Heart left ventricle (tissue), 16 donors: ENCODE measurements at regions of chr2 and their contacts with region 1.

Region 1: DNA sequence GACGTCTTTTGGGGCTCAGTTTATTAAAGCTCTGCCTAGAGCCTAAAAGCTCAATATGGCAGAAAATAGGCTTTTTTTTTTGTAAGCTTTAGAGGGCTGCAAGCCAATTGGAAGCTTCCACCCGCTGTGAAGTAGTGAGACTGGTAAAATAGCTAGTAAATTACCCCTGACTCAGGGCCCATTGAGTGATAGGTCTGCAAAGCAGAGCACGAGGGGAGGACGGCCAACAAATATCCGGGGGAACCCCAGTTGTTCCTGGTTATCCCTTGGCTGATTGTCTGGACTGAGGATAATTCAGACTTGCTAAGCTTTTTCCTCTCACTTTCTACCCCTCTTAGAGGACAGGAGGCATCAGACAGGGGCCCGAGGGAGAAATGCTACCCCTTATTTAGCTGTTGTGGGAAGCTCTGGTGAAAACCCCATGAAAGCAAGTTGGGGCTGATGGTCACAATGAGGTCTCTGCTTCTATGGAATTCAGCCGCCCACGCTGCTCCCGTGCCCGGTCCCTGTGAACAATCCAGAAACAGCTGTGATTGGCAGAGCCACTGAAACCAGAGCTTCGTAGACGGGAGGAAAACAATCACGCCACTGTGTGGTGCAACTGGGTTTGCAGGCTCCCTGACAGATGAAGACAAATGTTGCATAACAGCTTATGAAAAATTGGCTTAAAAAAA is 141.9 kb upstream of the LGALSL start:
- DNase-seq: peak; percentile 75 to 83 (median 79)
- ATAC-seq: peak; percentile 73 to 97 (median 94)
- H3K4me3 ChIP-seq: peak overlapping the region in 6 of 12 donors; percentile 2 to 40 (median 24)
- H3K27ac ChIP-seq: peak overlapping the region in 10 of 12 donors; percentile 12 to 69 (median 43)
- H3K4me1 ChIP-seq: peaks cover 0 to 26% (median 15%) of the 10 kb centered on the region in 12 donors
- H3K27me3 ChIP-seq: no peaks in the 10 kb centered on the region
- CTCF ChIP-seq: peak; percentile 35 to 71 (median 52)
- POLR2A ChIP-seq: no peak

Region 2: DNA sequence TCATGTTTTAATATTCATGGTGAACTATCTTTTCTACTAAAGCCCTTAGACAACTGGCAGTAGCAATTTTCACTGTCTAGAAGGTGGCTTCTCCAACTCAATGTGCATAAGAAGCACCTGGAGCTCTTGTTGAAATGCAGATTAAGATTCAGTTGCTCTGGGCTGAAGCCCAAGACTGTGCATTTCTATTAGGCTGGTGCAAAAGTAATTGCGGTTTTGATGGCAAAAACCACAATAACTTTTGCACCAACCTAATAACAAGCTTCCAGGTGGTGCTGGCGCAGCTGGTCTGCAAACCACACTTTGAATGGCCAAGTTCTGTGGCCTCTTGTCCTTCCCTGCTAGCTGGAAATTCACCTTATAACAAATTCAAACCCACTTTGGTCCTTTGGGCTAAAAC is 266.1 kb before region 1 on chr2:
- intact Hi-C with region 1: loop called in 6 of 10 experiments (anchors 1 to 5 kb)
- DNase-seq: no peak
- ATAC-seq: no peak
- H3K4me3 ChIP-seq: no peak overlapping the region
- H3K27ac ChIP-seq: no peak overlapping the region
- H3K4me1 ChIP-seq: peaks cover 0 to 7% (median 0%) of the 10 kb centered on the region in 12 donors
- H3K27me3 ChIP-seq: no peaks in the 10 kb centered on the region
- CTCF ChIP-seq: no peak
- POLR2A ChIP-seq: no peak

Region 3: DNA sequence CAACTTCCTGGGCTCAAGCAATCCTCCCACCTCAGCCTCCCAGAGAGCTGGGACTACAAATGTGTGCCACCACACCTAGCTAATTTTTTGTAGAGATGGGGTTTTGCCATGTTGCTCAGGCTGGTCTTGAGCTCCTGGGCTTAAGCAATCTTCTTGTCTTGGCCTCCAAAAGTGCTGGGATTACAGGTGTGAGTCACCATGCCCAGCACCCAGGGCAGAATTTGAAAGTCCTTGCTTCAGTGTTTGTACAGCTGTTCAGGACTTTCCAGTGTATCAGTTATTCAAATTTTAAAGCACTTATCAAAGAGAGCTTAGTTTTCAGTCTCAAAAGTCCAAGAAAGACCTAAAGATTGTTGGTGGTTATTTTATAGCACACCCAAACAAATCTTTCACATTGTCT is 249.3 kb before region 1 on chr2:
- intact Hi-C with region 1: loop called in 1 of 10 experiments (anchors 5 kb)
- DNase-seq: no peak
- ATAC-seq: no peak
- H3K4me3 ChIP-seq: no peak overlapping the region
- H3K27ac ChIP-seq: no peak overlapping the region
- H3K4me1 ChIP-seq: peaks cover 0 to 28% (median 8%) of the 10 kb centered on the region in 12 donors
- H3K27me3 ChIP-seq: no peaks in the 10 kb centered on the region
- CTCF ChIP-seq: no peak
- POLR2A ChIP-seq: no peak

Region 4: DNA sequence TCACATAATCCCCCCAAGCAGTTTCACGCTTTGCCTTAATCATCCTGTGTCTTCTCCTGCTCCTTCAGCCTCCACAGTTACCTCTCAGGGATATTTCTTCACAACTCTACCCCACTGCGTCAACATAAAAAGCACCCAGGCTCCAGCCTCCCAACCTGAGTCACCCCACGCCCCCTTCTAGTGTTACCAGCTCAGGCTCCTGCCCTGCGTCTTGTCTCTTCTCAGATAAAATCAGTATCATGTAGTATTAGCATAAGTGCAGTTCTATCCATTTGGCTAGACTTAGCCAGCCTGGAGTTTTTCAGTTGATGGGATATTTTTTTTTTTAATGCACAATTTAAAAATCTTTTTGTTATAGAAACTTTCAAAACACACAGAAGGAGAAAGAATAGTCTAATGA is 158.3 kb before region 1 on chr2:
- intact Hi-C with region 1: loop called in 2 of 10 experiments (anchors 5 to 10 kb)
- DNase-seq: no peak
- ATAC-seq: no peak
- H3K4me3 ChIP-seq: no peak overlapping the region
- H3K27ac ChIP-seq: no peak overlapping the region
- H3K4me1 ChIP-seq: peaks cover 0 to 8% (median 0%) of the 10 kb centered on the region in 12 donors
- H3K27me3 ChIP-seq: no peaks in the 10 kb centered on the region
- CTCF ChIP-seq: no peak
- POLR2A ChIP-seq: no peak

Region 5: DNA sequence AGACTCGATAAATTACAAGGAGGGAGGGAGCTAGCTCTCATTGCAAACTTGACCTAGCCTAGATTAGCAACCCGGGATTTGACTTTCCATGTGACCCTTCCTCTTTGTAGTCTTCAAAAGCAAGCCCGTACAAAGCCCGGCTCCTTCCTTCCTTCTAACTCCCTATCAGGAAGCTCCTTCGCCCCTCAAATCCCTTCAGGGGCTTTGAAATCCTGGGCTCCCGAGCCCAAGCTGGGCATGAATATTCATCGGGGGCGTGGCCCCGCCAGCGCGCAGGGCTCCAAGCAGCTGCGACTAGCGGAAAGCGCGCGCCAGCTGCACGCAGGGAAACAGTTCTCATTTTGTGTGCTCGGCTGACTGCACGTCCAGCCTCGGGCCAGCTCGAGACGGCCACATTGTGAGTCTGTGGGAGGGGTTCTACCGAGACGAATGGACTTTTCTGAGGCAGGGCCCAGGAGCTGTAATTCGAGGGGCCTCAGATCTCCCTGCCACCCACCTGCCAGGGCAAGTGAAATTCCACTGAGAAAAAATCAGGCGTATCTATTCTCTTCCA is 83.9 kb before region 1 on chr2:
- intact Hi-C with region 1: loop called in 1 of 10 experiments (anchors 5 kb)
- DNase-seq: peak; percentile 86 to 94 (median 87)
- ATAC-seq: peak; percentile 94 to 99 (median 98)
- H3K4me3 ChIP-seq: peak overlapping the region; percentile 14 to 62 (median 50)
- H3K27ac ChIP-seq: peak overlapping the region; percentile 21 to 88 (median 78)
- H3K4me1 ChIP-seq: peaks cover 0 to 27% (median 15%) of the 10 kb centered on the region in 12 donors
- H3K27me3 ChIP-seq: no peaks in the 10 kb centered on the region
- CTCF ChIP-seq: peak in 3 of 12 donors; percentile 10 to 16 (median 13)
- POLR2A ChIP-seq: peak in 1 of 2 donors; percentile 62